Body of pancreas (tissue), 4 donors: ENCODE measurements at regions of chr19 and their contacts with region 1.

Region 1: GRCh38 chr19:28705008-28705407 is 507.9 kb downstream of the UQCRFS1 start:
- DNase-seq: peak in 2 of 4 donors; percentile 17 to 18
- ATAC-seq: peak; percentile 71
- H3K4me3 ChIP-seq: no peak overlapping the region
- H3K27ac ChIP-seq: peak overlapping the region in 3 of 4 donors; percentile 12 to 27 (median 26)
- H3K4me1 ChIP-seq: no peaks in the 10 kb centered on the region
- H3K27me3 ChIP-seq: no peaks in the 10 kb centered on the region
- CTCF ChIP-seq: peak in 4 of 7 experiments; percentile 12 to 40 (median 28)
- POLR2A ChIP-seq: no peak

Region 2: DNA sequence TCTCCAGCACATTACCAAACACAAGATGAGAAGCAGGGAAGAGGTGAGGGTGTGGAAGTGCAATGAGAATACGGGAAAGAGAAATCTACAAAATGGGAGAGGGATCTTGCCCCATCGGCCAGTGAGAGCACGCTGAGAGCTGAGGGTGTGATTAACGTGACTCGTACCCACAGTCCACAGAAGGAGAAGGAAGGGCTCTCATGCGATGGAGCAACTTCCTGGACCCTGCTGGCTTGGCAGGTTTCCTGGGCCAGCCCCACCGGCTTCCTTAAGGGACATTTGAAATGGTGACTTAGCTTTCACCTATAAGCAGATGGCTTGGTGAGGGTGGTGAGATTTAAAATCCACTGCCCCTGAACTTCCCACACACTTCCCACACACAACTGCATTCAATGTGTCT is 232.2 kb before region 1 on chr19:
- intact Hi-C with region 1: loop called (anchors 5 kb)
- DNase-seq: peak in 2 of 4 donors; percentile 17 to 36
- ATAC-seq: no peak
- H3K4me3 ChIP-seq: no peak overlapping the region
- H3K27ac ChIP-seq: no peak overlapping the region
- H3K4me1 ChIP-seq: peaks cover 13% of the 10 kb centered on the region
- H3K27me3 ChIP-seq: no peaks in the 10 kb centered on the region
- CTCF ChIP-seq: no peak
- POLR2A ChIP-seq: no peak